ENCODE measurements at regions of chr10 and their contacts with region 1.

Region 1: DNA sequence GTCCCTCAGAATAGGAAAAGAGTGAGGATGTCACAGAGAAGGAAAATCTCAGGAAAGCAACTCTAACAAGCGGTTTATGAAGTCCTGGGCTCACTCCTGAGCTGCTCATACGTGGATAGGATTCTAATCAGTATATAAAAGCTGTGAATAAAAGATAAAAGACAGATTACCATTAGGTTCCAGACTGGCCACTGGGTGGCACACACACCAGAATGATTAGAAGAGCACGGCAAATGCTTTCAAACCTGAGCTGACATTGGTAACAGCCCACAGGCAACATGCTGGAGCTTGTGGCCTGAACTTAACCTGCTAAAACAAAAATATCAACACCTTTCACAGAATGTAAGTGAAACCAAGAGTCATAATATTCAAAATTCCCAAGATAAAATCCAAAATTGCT is 370.8 kb downstream of the GRID1 start:
- DNase-seq: no peak
- ATAC-seq: peak in 1 of 4 donors; percentile 55
- H3K4me3 ChIP-seq: no peak overlapping the region
- H3K27ac ChIP-seq: no peak overlapping the region
- H3K4me1 ChIP-seq: no peaks in the 10 kb centered on the region
- H3K27me3 ChIP-seq: peaks cover 0 to 4% (median 0%) of the 10 kb centered on the region in 9 donors
- CTCF ChIP-seq: peak in 11 of 12 donors; percentile 11 to 50 (median 39)
- POLR2A ChIP-seq: no peak

Region 2: DNA sequence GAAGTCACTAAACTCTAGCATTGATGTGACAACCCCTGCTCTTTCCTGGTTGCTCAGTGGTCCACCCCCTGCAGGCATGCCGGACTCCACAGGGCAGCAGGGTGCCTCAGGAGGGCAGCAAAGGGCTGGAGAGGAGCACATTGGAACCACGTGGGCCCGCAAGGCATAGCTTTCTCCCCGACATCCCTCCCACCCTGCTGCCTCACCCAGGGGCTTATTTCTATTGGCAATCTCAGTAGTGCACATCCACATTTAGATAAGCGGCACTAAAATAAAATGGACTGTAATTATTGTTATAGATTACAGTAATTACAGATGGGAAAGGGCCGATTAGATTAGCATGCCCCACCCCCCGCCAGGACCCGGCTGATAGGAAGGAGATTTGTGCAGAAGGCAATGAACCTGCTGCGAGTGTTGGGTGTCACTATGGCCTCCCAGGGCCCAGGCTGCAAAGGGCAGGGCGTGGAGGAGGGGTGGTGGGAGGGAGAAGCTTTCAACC is 209.3 kb before region 1 on chr10:
- intact Hi-C with region 1: loop called in 1 of 10 experiments (anchors 5 kb)
- DNase-seq: peak in 1 of 5 donors; percentile 41
- ATAC-seq: peak in 3 of 4 donors; percentile 65 to 80 (median 67)
- H3K4me3 ChIP-seq: no peak overlapping the region
- H3K27ac ChIP-seq: no peak overlapping the region
- H3K4me1 ChIP-seq: peaks cover 0 to 5% (median 0%) of the 10 kb centered on the region in 12 donors
- H3K27me3 ChIP-seq: no peaks in the 10 kb centered on the region
- CTCF ChIP-seq: peak; percentile 15 to 59 (median 36)
- POLR2A ChIP-seq: no peak

Region 3: DNA sequence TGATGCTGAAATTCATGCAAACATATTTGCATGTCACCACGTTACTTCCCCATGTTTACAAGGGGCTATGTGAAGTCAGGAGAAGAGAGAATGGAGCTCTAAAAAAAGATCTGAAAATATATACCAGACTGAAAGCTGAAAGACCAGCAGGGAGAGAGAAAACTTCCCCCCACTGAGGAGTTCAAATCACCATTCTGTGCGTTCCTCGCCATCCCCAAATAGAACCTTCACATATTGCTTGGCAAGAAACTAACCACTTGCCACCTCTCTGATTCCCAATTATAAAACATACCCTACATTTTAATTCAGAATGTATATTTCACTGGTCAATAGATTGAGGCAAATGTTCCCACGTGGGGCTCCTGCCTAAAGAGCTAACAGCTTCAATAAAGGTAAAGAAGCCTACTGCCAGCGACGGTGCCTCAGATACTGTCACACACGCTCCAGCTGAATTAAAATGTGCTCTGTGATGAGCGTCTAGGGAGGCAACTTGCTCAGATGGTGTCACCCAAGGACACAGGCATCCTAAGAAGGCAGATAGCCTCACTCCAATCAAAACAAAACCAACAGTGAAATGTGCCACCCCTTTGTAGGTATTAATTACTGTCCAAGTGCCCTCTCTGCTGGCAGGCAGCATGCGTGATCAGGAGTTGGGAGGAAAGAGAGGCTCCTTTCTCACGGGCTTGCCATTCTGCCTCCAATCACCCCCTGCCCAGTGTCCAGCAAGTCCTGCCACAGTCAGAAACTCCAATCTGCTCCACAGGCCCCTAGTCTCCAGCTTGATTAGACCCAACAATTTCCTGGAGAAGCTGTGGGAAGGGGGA is 72.7 kb after region 1 on chr10:
- intact Hi-C with region 1: loop called in 1 of 10 experiments (anchors 5 kb)
- DNase-seq: no peak
- ATAC-seq: peak in 3 of 4 donors; percentile 47 to 82 (median 52)
- H3K4me3 ChIP-seq: no peak overlapping the region
- H3K27ac ChIP-seq: no peak overlapping the region
- H3K4me1 ChIP-seq: no peaks in the 10 kb centered on the region
- H3K27me3 ChIP-seq: peaks cover 0 to 5% (median 0%) of the 10 kb centered on the region in 9 donors
- CTCF ChIP-seq: peak in 4 of 12 donors; percentile 13 to 23 (median 20)
- POLR2A ChIP-seq: no peak

Region 4: GRCh38 chr10:86355571-86356038 is 359.8 kb after region 1 on chr10:
- intact Hi-C with region 1: loop called in 4 of 10 experiments (anchors 10 kb)
- DNase-seq: peak; percentile 73 to 87 (median 75)
- ATAC-seq: peak; percentile 75 to 88 (median 86)
- H3K4me3 ChIP-seq: no peak overlapping the region
- H3K27ac ChIP-seq: peak overlapping the region in 7 of 12 donors; percentile 16 to 84 (median 43)
- H3K4me1 ChIP-seq: peaks cover 0 to 45% (median 14%) of the 10 kb centered on the region in 12 donors
- H3K27me3 ChIP-seq: no peaks in the 10 kb centered on the region
- CTCF ChIP-seq: no peak
- POLR2A ChIP-seq: no peak

Measured in heart left ventricle (tissue), 16 donors.